Activated CD4-positive, alpha-beta T cell treated with anti-CD3 and anti-CD28 coated beads, Interleukin-2, amount 10 ng/mL, durations not matched to agents 7 days and 5 days (primary cell): ENCODE measurements at regions of chr20 and their contacts with region 1.

Region 1: DNA sequence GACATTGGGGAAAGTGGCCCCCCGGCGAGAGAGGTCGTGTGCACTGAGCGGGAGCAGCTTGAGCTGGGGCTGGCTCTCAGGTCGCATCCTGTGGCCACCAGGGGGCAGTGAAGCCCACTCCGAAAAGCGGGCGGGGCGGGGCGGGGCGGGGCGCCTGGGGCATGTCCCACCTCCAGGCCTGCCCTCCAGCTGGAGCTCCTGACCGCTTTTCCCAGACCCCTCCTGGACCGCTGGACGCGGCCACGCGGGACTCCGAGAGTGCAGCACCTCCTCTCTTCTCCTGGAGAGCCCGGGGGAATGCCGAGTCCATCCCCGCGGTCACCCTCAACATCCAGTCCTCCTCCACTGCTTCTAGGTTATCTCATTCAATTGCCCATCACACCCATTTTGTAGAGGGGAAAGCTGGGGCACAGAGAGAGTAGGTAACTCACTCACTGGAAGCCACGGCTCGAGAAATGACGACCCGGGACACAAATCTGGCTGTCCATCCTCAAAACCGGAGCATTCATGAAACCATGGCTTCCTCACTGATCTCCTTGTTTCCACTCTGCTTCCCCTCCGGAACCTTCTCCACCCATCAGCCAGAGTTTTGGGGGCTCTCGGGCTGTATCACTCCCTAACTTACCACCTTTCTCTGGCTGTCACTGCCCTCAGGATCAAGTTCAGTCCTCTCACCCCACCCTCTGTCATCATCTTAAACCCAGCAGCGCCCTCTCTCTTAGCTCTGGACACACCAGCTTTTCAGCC is 24.1 kb downstream of the COX4I2 start:
- DNase-seq: peak; percentile 79
- H3K4me3 Mint-ChIP-seq: peak overlapping the region; percentile 63
- H3K27ac Mint-ChIP-seq: peak overlapping the region; percentile 88
- H3K4me1 Mint-ChIP-seq: peaks cover 52% of the 10 kb centered on the region
- H3K27me3 Mint-ChIP-seq: no peaks in the 10 kb centered on the region

Region 2: GRCh38 chr20:31630187-31630790 is 31.5 kb before region 1 on chr20:
- CTCF ChIA-PET with region 1: interaction called, 22 read pairs
- POLR2A ChIA-PET with region 1: interaction called, 5 read pairs
- DNase-seq: no peak
- H3K4me3 Mint-ChIP-seq: no peak overlapping the region
- H3K27ac Mint-ChIP-seq: no peak overlapping the region
- H3K4me1 Mint-ChIP-seq: no peaks in the 10 kb centered on the region
- H3K27me3 Mint-ChIP-seq: peaks cover 2% of the 10 kb centered on the region

Region 3: DNA sequence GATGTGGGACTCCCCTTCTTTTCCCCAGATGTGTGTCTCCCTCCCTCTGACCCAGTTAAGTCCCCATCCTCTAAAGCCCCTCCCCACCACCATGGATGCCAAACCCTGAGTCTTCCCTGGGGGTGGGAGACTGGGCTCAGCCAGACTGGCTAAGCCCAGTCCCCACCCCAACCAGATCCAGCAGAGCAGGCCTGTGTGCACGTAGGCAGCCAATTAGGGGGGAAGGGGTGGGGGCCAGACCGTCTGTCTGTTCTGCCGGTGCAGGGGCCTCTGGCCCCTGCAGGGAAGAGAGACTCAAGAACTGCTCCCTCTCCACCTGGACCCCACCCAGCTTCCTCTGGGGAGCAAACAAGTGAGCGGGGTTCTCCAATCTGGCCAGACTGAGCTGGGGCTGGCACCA is 23.5 kb before region 1 on chr20:
- CTCF ChIA-PET with region 1: interaction called, 22 read pairs
- POLR2A ChIA-PET with region 1: no interaction called
- DNase-seq: no peak
- H3K4me3 Mint-ChIP-seq: no peak overlapping the region
- H3K27ac Mint-ChIP-seq: no peak overlapping the region
- H3K4me1 Mint-ChIP-seq: peaks cover 19% of the 10 kb centered on the region
- H3K27me3 Mint-ChIP-seq: peaks cover 19% of the 10 kb centered on the region

Region 4: GRCh38 chr20:31674895-31675827 is 13.4 kb after region 1 on chr20:
- CTCF ChIA-PET with region 1: interaction called, 62 read pairs
- POLR2A ChIA-PET with region 1: no interaction called
- DNase-seq: peak; percentile 81
- H3K4me3 Mint-ChIP-seq: peak overlapping the region; percentile 80
- H3K27ac Mint-ChIP-seq: peak overlapping the region; percentile 99
- H3K4me1 Mint-ChIP-seq: peaks cover 82% of the 10 kb centered on the region
- H3K27me3 Mint-ChIP-seq: no peaks in the 10 kb centered on the region

Region 5: GRCh38 chr20:31698803-31699718 is 37.3 kb after region 1 on chr20:
- CTCF ChIA-PET with region 1: interaction called, 13 read pairs
- POLR2A ChIA-PET with region 1: interaction called, 7 read pairs
- DNase-seq: peak; percentile 33
- H3K4me3 Mint-ChIP-seq: peak overlapping the region; percentile 21
- H3K27ac Mint-ChIP-seq: peak overlapping the region; percentile 83
- H3K4me1 Mint-ChIP-seq: peaks cover 63% of the 10 kb centered on the region
- H3K27me3 Mint-ChIP-seq: no peaks in the 10 kb centered on the region

Region 6: DNA sequence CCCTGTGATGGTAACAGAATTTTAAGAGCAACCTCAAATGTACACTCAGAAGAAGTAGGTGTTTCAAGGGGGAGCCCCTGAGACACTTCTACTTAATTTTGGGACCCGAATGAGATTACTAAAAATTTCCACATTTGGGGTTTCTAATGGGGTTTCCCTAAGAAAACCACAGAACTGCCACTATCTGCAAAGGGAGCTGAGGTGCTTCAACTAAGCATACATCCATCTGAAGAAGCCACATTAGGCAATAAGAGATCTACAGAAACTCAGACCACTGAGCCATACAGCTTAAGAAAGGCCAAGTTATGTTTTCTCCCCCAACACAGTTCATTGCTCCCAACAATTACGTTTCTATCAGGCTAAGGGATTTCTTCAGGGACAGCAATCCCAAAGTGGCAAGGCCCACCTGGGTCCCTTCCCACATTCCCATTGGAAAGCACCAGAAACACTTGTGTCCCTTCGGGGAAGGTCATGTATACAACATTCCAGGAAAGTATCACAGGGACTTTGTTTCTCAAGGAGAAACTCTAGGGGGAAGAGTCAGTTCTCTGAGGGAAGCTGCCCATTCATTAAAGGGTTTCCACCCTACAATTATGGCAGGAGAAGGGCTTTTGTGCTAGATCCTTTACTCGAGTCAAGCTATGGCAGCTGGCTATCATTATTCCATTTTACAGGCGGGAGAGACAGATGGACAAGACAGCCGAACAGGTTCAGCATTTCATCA is 55.8 kb after region 1 on chr20:
- CTCF ChIA-PET with region 1: interaction called, 219 read pairs
- POLR2A ChIA-PET with region 1: interaction called, 25 read pairs
- DNase-seq: peak; percentile 22
- H3K4me3 Mint-ChIP-seq: peak overlapping the region; percentile 71
- H3K27ac Mint-ChIP-seq: peak overlapping the region; percentile 65
- H3K4me1 Mint-ChIP-seq: peaks cover 76% of the 10 kb centered on the region
- H3K27me3 Mint-ChIP-seq: no peaks in the 10 kb centered on the region